ENCODE measurements at regions of chr7 and their contacts with region 1.

Region 1: GRCh38 chr7:127708788-127709187 is 56.8 kb downstream of the SND1 start:
- DNase-seq: peak; percentile 25 to 76 (median 65)
- ATAC-seq: peak; percentile 82
- H3K4me3 ChIP-seq: no peak overlapping the region
- H3K4me3 Mint-ChIP-seq: no peak overlapping the region
- H3K27ac ChIP-seq: no peak overlapping the region
- H3K27ac Mint-ChIP-seq: peak overlapping the region in 2 of 9 donors; percentile 18 to 26
- H3K4me1 ChIP-seq: no peaks in the 10 kb centered on the region
- H3K4me1 Mint-ChIP-seq: peaks cover 0 to 8% (median 0%) of the 10 kb centered on the region in 7 donors
- H3K27me3 ChIP-seq: no peaks in the 10 kb centered on the region
- H3K27me3 Mint-ChIP-seq: no peaks in the 10 kb centered on the region

Region 2: DNA sequence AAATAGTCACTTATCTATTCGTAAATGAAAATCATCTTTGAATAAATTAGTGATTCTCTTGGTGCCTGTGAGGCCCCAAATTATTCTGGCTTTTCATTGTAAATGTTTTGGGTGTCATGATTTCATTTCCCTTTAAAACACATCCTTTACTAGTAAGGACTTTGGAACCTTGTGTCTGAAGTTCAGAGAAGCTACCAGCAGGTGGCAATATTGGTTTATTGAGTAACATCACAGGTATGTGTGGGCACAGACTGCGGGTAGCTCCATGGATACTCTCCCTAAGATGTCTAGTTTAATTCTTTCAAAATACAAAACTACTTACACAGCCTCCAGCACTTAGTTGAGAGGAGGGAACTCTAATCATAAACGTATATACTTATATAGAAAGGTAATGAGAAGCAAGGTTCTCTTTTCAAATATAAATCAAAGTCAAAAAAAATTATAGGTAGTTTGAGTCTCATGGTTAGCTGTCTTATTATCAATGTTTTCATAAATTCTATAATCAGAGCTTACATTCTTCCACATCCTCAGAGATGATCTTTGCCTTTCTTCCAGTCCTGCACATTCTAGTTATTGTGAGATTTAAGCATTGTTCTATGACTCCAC is 905.6 kb before region 1 on chr7:
- CTCF ChIA-PET with region 1: no interaction called
- POLR2A ChIA-PET with region 1: no interaction called
- intact Hi-C with region 1: loop called in 1 of 2 experiments (anchors 5 kb)
- DNase-seq: peak in 5 of 9 donors; percentile 8 to 47 (median 21)
- ATAC-seq: no peak
- H3K4me3 ChIP-seq: no peak overlapping the region
- H3K4me3 Mint-ChIP-seq: no peak overlapping the region
- H3K27ac ChIP-seq: no peak overlapping the region
- H3K27ac Mint-ChIP-seq: no peak overlapping the region
- H3K4me1 ChIP-seq: no peaks in the 10 kb centered on the region
- H3K4me1 Mint-ChIP-seq: no peaks in the 10 kb centered on the region
- H3K27me3 ChIP-seq: no peaks in the 10 kb centered on the region
- H3K27me3 Mint-ChIP-seq: peaks cover 0 to 15% (median 7%) of the 10 kb centered on the region in 5 donors

Region 3: GRCh38 chr7:127598318-127598717 is 110.5 kb before region 1 on chr7:
- CTCF ChIA-PET with region 1: no interaction called
- POLR2A ChIA-PET with region 1: no interaction called
- intact Hi-C with region 1: no loop called
- DNase-seq: no peak
- ATAC-seq: no peak
- H3K4me3 ChIP-seq: no peak overlapping the region
- H3K4me3 Mint-ChIP-seq: no peak overlapping the region
- H3K27ac ChIP-seq: no peak overlapping the region
- H3K27ac Mint-ChIP-seq: no peak overlapping the region
- H3K4me1 ChIP-seq: no peaks in the 10 kb centered on the region
- H3K4me1 Mint-ChIP-seq: peaks cover 0 to 3% (median 0%) of the 10 kb centered on the region in 7 donors
- H3K27me3 ChIP-seq: no peaks in the 10 kb centered on the region
- H3K27me3 Mint-ChIP-seq: no peaks in the 10 kb centered on the region

Region 4: DNA sequence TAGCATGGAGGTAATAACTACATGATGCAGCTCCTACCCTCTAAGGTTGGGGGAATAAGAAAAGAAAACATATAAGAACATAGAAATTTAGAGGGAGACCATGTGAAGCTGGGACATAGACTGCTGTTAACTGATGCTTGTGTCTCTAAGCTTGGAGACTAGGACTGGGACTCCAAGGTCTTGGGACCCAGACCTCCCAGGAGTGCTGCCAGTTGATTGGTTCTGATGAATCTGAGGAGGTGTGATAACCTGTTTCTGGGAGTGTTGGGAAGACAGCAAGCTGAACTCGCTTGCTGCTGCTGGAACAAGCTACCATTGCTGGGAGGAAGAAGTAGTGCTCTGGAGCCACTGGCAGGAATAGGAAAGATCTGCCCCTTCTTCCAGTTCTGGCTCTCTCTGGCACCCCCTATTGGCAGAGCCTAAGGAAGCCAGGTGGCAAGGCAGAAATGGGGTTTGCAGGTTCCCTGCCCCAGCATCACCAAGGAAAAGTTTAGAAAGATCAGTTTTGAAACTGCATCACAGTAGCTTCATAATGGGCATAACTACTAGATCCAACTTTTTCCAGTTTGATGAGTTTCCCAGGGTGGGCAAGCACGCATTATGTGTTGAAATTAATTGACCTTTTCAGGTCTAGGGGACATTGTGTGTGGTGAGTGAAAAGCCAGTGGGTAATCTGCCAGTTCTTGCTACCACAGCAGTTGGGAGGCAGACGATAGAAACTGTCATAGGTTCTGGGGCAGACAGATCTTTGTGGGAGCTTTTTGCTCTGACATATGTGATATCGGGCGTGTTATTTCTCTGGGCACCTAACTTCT is 83.9 kb after region 1 on chr7:
- CTCF ChIA-PET with region 1: no interaction called
- POLR2A ChIA-PET with region 1: no interaction called
- intact Hi-C with region 1: loop called in 1 of 2 experiments (anchors 2 kb)
- DNase-seq: peak in 4 of 9 donors; percentile 1 to 23 (median 6)
- ATAC-seq: peak; percentile 57
- H3K4me3 ChIP-seq: no peak overlapping the region
- H3K4me3 Mint-ChIP-seq: no peak overlapping the region
- H3K27ac ChIP-seq: no peak overlapping the region
- H3K27ac Mint-ChIP-seq: peak overlapping the region in 1 of 9 donors; percentile 10
- H3K4me1 ChIP-seq: no peaks in the 10 kb centered on the region
- H3K4me1 Mint-ChIP-seq: peaks cover 6 to 58% (median 49%) of the 10 kb centered on the region in 7 donors
- H3K27me3 ChIP-seq: no peaks in the 10 kb centered on the region
- H3K27me3 Mint-ChIP-seq: no peaks in the 10 kb centered on the region

Region 5: GRCh38 chr7:128020159-128020558 is 311.4 kb after region 1 on chr7:
- CTCF ChIA-PET with region 1: interaction called, 3 read pairs
- POLR2A ChIA-PET with region 1: no interaction called
- intact Hi-C with region 1: loop called in 1 of 2 experiments (anchors 5 kb)
- DNase-seq: peak in 1 of 9 donors; percentile 9
- ATAC-seq: no peak
- H3K4me3 ChIP-seq: no peak overlapping the region
- H3K4me3 Mint-ChIP-seq: no peak overlapping the region
- H3K27ac ChIP-seq: no peak overlapping the region
- H3K27ac Mint-ChIP-seq: peak overlapping the region in 1 of 9 donors; percentile 3
- H3K4me1 ChIP-seq: no peaks in the 10 kb centered on the region
- H3K4me1 Mint-ChIP-seq: peaks cover 0 to 14% (median 4%) of the 10 kb centered on the region in 7 donors
- H3K27me3 ChIP-seq: no peaks in the 10 kb centered on the region
- H3K27me3 Mint-ChIP-seq: no peaks in the 10 kb centered on the region

Region 6: GRCh38 chr7:128056901-128057300 is 348.1 kb after region 1 on chr7:
- CTCF ChIA-PET with region 1: no interaction called
- POLR2A ChIA-PET with region 1: no interaction called
- intact Hi-C with region 1: loop called in 1 of 2 experiments (anchors 2 kb)
- DNase-seq: no peak
- ATAC-seq: no peak
- H3K4me3 ChIP-seq: no peak overlapping the region
- H3K4me3 Mint-ChIP-seq: no peak overlapping the region
- H3K27ac ChIP-seq: no peak overlapping the region
- H3K27ac Mint-ChIP-seq: peak overlapping the region in 2 of 9 donors; percentile 32
- H3K4me1 ChIP-seq: peaks cover 23 to 58% of the 10 kb centered on the region in 2 donors
- H3K4me1 Mint-ChIP-seq: peaks cover 44 to 97% (median 78%) of the 10 kb centered on the region in 7 donors
- H3K27me3 ChIP-seq: no peaks in the 10 kb centered on the region
- H3K27me3 Mint-ChIP-seq: no peaks in the 10 kb centered on the region

Region 7: DNA sequence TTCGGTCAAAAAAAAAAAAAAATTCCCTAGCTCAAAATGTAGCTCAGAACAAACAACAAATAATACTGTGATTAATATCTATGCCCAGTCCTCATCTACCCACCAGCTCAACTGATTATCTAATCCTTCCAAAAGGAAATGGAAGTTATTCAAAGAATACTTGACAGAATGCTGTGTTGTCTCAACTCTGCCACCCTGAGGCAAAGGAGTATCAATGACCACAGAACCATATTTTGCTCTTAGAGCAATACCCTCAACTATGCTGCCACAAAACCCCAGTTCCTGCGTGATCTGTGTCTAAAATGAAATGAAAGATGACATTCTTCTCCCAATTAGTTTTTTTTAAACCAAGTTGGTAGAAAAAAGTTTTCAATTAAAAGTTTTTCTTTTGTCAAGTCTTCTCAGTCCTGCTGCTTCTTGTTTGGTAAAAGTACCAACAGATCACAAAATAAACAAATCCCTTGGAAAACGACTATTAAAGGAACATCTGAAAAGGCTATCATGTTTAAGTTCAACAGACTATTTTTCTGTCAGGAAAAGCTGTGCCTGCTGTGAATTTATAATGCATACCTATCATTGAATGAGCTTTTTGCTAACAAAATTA is 613.4 kb after region 1 on chr7:
- CTCF ChIA-PET with region 1: no interaction called
- POLR2A ChIA-PET with region 1: no interaction called
- intact Hi-C with region 1: loop called (anchors 1 to 10 kb)
- DNase-seq: peak in 5 of 9 donors; percentile 13 to 31 (median 22)
- ATAC-seq: peak; percentile 80
- H3K4me3 ChIP-seq: no peak overlapping the region
- H3K4me3 Mint-ChIP-seq: peak overlapping the region in 4 of 10 donors; percentile 2 to 33 (median 21)
- H3K27ac ChIP-seq: no peak overlapping the region
- H3K27ac Mint-ChIP-seq: peak overlapping the region in 6 of 9 donors; percentile 7 to 56 (median 13)
- H3K4me1 ChIP-seq: peaks cover 5 to 33% of the 10 kb centered on the region in 2 donors
- H3K4me1 Mint-ChIP-seq: peaks cover 17 to 38% (median 27%) of the 10 kb centered on the region in 7 donors
- H3K27me3 ChIP-seq: no peaks in the 10 kb centered on the region
- H3K27me3 Mint-ChIP-seq: no peaks in the 10 kb centered on the region

Measured in naive thymus-derived CD4-positive, alpha-beta T cell (primary cell).